ENCODE measurements at regions of chr4 and their contacts with region 1.

Region 1: GRCh38 chr4:37970487-37971101 is 10.4 kb downstream of the PTTG2 start:
- DNase-seq: peak; percentile 81
- ATAC-seq: peak; percentile 99
- H3K4me3 ChIP-seq: no peak overlapping the region
- H3K4me3 Mint-ChIP-seq: no peak overlapping the region
- H3K27ac ChIP-seq: peak overlapping the region in 1 of 2 donors; percentile 44
- H3K27ac Mint-ChIP-seq: peak overlapping the region; percentile 54
- H3K4me1 ChIP-seq: peaks cover 15 to 20% of the 10 kb centered on the region in 2 donors
- H3K4me1 Mint-ChIP-seq: peaks cover 40% of the 10 kb centered on the region
- H3K27me3 ChIP-seq: no peaks in the 10 kb centered on the region
- H3K27me3 Mint-ChIP-seq: no peaks in the 10 kb centered on the region
- CTCF ChIP-seq: peak; percentile 73

Region 2: DNA sequence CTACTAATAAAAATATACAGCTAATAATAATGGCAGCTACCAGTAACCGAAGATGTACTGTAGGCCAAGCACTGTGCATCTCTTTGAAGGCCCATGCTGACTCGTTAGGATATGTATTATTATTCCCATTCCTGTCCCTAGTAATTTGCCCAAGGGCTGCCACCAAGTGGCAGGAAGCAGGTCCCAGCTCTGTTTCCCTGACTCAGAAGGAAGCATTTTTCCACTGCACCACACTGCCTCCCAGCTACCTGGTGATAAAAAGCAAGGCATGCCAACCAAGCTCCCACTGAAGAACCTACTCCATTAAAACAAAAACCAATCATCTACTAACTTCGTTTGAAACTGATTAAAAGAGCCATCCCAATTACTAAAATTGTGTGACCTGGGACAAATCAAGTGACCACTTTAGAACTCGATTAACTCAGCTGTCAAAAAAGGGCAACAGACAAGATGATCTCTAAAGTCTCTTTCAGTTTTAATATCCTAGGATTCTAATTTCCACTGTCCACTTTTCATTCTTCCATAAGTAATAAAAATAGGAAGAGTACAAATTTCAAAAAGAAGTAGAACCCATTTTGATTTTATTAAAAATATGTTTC is 168.4 kb before region 1 on chr4:
- CTCF ChIA-PET with region 1: interaction called, 38 read pairs
- POLR2A ChIA-PET with region 1: interaction called, 3 read pairs
- intact Hi-C with region 1: no loop called
- DNase-seq: no peak
- ATAC-seq: no peak
- H3K4me3 ChIP-seq: no peak overlapping the region
- H3K4me3 Mint-ChIP-seq: no peak overlapping the region
- H3K27ac ChIP-seq: no peak overlapping the region
- H3K27ac Mint-ChIP-seq: no peak overlapping the region
- H3K4me1 ChIP-seq: no peaks in the 10 kb centered on the region
- H3K4me1 Mint-ChIP-seq: peaks cover 3% of the 10 kb centered on the region
- H3K27me3 ChIP-seq: no peaks in the 10 kb centered on the region
- H3K27me3 Mint-ChIP-seq: peaks cover 6% of the 10 kb centered on the region
- CTCF ChIP-seq: no peak

Region 3: GRCh38 chr4:37946503-37947179 is 24.0 kb before region 1 on chr4:
- CTCF ChIA-PET with region 1: no interaction called
- POLR2A ChIA-PET with region 1: no interaction called
- intact Hi-C with region 1: no loop called
- DNase-seq: no peak
- ATAC-seq: no peak
- H3K4me3 ChIP-seq: no peak overlapping the region
- H3K4me3 Mint-ChIP-seq: no peak overlapping the region
- H3K27ac ChIP-seq: no peak overlapping the region
- H3K27ac Mint-ChIP-seq: no peak overlapping the region
- H3K4me1 ChIP-seq: peaks cover 8 to 24% of the 10 kb centered on the region in 2 donors
- H3K4me1 Mint-ChIP-seq: peaks cover 32% of the 10 kb centered on the region
- H3K27me3 ChIP-seq: no peaks in the 10 kb centered on the region
- H3K27me3 Mint-ChIP-seq: no peaks in the 10 kb centered on the region
- CTCF ChIP-seq: no peak